Esophagus muscularis mucosa (tissue), 4 donors: ENCODE measurements at regions of chr17 and their contacts with region 1.

Region 1: DNA sequence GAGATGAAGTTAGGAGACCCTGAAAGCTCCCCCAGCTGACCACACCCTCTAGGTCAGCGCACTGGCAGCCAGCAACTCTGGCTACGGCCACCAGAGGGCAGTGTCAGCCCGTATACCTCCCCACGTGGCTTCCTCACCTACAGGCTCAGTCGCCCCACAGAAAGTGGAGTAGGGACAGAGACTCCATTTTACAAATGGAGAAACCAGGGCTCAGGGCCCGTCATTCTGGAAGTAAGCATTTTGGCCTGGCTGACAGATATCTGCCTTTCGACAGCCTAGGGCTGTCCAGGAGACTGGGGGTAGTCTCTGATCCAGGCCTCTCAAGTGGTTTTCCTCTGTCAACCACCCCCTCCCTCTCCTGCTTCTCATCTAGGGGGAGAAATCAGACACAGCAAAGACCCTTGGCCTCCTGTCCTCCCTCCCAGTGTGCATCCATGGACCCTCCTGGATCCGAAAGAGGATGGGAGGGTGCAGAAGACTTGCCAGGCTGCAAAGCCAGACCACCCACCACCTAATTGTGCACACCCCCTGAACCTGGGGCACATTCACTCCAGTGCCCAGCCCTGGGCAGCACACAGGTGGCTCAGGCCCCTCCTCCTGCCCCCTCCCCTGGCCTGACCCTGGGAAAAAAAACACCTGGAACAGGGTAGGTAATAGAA is 3.8 kb upstream of the HAP1 start:
- DNase-seq: peak; percentile 94
- H3K4me3 ChIP-seq: no peak overlapping the region
- H3K27ac ChIP-seq: no peak overlapping the region
- H3K4me1 ChIP-seq: peaks cover 18 to 28% (median 21%) of the 10 kb centered on the region in 4 donors
- H3K27me3 ChIP-seq: peaks cover 11 to 59% (median 39%) of the 10 kb centered on the region in 4 donors
- CTCF ChIP-seq: peak; percentile 97 to 99 (median 99)
- EP300 ChIP-seq: no peak
- POLR2A ChIP-seq: no peak

Region 2: DNA sequence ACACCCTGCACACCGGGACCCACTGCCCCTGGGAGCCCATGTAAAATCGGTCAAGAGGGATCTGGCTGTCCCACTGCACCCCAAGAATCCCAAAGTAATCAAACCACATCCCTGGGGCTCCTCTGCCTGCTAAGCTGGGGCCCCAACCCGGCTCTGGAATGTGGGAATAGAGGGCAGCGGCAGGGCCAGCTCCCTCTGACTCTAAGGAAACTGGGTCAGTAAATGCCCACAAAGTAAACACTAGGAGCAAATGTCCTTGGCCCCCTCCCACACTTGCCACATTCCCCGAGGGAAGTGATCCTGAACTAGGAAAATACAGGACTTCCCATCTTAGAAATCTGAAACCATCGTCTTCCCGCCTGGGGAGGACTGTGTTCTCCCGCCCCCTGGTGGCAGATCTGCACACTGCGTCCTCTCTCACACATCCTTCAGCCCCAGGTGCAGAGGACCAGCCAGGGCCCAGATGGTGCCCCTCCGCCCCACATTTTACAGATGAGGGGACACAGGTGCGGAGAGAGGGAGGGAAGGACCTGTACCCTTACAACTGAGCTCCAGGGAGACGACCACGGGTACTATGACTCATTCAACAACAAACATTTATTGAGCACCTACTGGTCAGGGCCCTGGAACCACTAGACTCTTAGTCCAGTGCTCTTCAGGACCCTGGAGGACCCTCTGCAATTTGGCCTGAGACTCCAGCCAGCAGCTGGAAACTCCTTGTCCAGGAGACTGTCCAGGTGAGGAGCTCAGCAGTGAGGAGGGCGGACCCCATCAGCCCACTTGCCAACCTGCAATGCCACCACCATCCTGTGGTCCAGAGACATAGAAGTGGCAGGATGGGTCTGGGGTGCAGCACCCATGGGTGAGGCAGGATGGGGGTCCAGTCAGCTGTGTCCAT is 63.4 kb after region 1 on chr17:
- intact Hi-C with region 1: loop called (anchors 1 kb)
- DNase-seq: peak; percentile 97
- H3K4me3 ChIP-seq: peak overlapping the region in 3 of 4 donors; percentile 7 to 38 (median 23)
- H3K27ac ChIP-seq: peak overlapping the region in 1 of 4 donors; percentile 28
- H3K4me1 ChIP-seq: peaks cover 7 to 14% (median 9%) of the 10 kb centered on the region in 4 donors
- H3K27me3 ChIP-seq: peaks cover 0 to 17% (median 0%) of the 10 kb centered on the region in 4 donors
- CTCF ChIP-seq: peak in 2 of 3 experiments; percentile 96 to 97
- EP300 ChIP-seq: no peak
- POLR2A ChIP-seq: no peak

Region 3: GRCh38 chr17:41885733-41886132 is 147.5 kb after region 1 on chr17:
- intact Hi-C with region 1: loop called (anchors 5 kb)
- DNase-seq: no peak
- H3K4me3 ChIP-seq: no peak overlapping the region
- H3K27ac ChIP-seq: no peak overlapping the region
- H3K4me1 ChIP-seq: no peaks in the 10 kb centered on the region
- H3K27me3 ChIP-seq: no peaks in the 10 kb centered on the region
- CTCF ChIP-seq: peak in 2 of 3 experiments; percentile 6 to 23
- EP300 ChIP-seq: no peak
- POLR2A ChIP-seq: no peak